ENCODE measurements at regions of chr6 and their contacts with region 1.

Region 1: GRCh38 chr6:145929037-145929633 is 35.0 kb downstream of the SHPRH start:
- DNase-seq: peak; percentile 53
- H3K4me3 ChIP-seq: no peak overlapping the region
- H3K27ac ChIP-seq: no peak overlapping the region
- H3K4me1 ChIP-seq: no peaks in the 10 kb centered on the region
- H3K27me3 ChIP-seq: no peaks in the 10 kb centered on the region
- CTCF ChIP-seq: peak; percentile 38 to 50
- POLR2A ChIP-seq: no peak

Region 2: GRCh38 chr6:145112711-145113151 is 816.4 kb before region 1 on chr6:
- CTCF ChIA-PET with region 1: no interaction called
- POLR2A ChIA-PET with region 1: no interaction called
- dilution Hi-C with region 1: no loop called
- intact Hi-C with region 1: no loop called
- DNase-seq: no peak
- H3K4me3 ChIP-seq: no peak overlapping the region
- H3K27ac ChIP-seq: no peak overlapping the region
- H3K4me1 ChIP-seq: no peaks in the 10 kb centered on the region
- H3K27me3 ChIP-seq: peaks cover 1 to 4% of the 10 kb centered on the region in 2 experiments
- CTCF ChIP-seq: no peak
- POLR2A ChIP-seq: no peak

Region 3: GRCh38 chr6:145904868-145905267 is 24.3 kb before region 1 on chr6:
- CTCF ChIA-PET with region 1: interaction called, 10 read pairs
- POLR2A ChIA-PET with region 1: no interaction called
- dilution Hi-C with region 1: no loop called
- intact Hi-C with region 1: no loop called
- DNase-seq: no peak
- H3K4me3 ChIP-seq: no peak overlapping the region
- H3K27ac ChIP-seq: no peak overlapping the region
- H3K4me1 ChIP-seq: no peaks in the 10 kb centered on the region
- H3K27me3 ChIP-seq: no peaks in the 10 kb centered on the region
- CTCF ChIP-seq: no peak
- POLR2A ChIP-seq: no peak

Region 4: GRCh38 chr6:145954985-145955384 is 25.9 kb after region 1 on chr6:
- CTCF ChIA-PET with region 1: interaction called, 13 read pairs
- POLR2A ChIA-PET with region 1: no interaction called
- dilution Hi-C with region 1: no loop called
- intact Hi-C with region 1: no loop called
- DNase-seq: no peak
- H3K4me3 ChIP-seq: no peak overlapping the region
- H3K27ac ChIP-seq: no peak overlapping the region
- H3K4me1 ChIP-seq: no peaks in the 10 kb centered on the region
- H3K27me3 ChIP-seq: no peaks in the 10 kb centered on the region
- CTCF ChIP-seq: no peak
- POLR2A ChIP-seq: no peak

Region 5: DNA sequence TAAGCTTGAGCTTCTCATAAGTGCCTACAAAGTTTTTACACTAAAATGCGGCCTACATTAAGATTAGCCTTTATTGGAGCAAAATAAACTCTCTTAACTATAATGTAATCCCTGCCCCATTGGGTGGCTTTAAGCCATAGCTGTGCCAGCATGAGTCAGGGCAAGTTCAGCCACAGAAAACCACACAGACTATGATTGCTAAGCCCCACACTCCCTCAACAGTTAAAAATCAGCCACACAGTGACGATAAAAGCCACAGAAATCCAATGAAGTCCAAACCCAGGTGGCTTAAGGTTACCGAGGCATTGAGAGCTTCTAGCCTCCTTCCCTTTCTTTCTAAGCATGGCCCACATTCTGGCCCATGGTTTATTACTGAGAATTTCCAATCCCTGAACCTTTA is 161.3 kb after region 1 on chr6:
- CTCF ChIA-PET with region 1: no interaction called
- POLR2A ChIA-PET with region 1: no interaction called
- dilution Hi-C with region 1: no loop called
- intact Hi-C with region 1: no loop called
- DNase-seq: no peak
- H3K4me3 ChIP-seq: no peak overlapping the region
- H3K27ac ChIP-seq: no peak overlapping the region
- H3K4me1 ChIP-seq: no peaks in the 10 kb centered on the region
- H3K27me3 ChIP-seq: no peaks in the 10 kb centered on the region
- CTCF ChIP-seq: no peak
- POLR2A ChIP-seq: no peak

Region 6: DNA sequence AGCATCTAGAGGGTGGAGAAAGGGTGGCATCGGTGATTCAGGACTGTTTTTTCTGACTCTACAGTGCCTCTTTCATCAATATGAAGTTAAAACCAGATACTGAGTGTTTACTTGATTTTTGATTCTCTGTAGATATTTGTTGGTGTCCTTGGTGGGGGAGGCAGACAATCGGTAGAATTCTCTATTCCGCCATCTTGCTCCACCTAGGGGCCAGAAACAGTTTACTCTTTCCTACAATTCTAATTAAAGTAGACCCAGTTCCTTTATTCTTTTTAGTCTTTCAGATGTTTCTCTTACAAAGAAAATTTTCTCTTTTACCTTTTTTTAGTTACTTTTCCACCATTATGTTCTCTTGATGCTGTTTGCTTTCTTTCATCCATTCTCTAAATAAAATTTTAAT is 452.4 kb after region 1 on chr6:
- CTCF ChIA-PET with region 1: no interaction called
- POLR2A ChIA-PET with region 1: no interaction called
- dilution Hi-C with region 1: no loop called
- intact Hi-C with region 1: loop called (anchors 2 kb)
- DNase-seq: no peak
- H3K4me3 ChIP-seq: no peak overlapping the region
- H3K27ac ChIP-seq: no peak overlapping the region
- H3K4me1 ChIP-seq: no peaks in the 10 kb centered on the region
- H3K27me3 ChIP-seq: no peaks in the 10 kb centered on the region
- CTCF ChIP-seq: peak; percentile 7 to 9
- POLR2A ChIP-seq: no peak

Region 7: GRCh38 chr6:146700078-146700686 is 771.0 kb after region 1 on chr6:
- CTCF ChIA-PET with region 1: interaction called, 87 read pairs
- POLR2A ChIA-PET with region 1: no interaction called
- dilution Hi-C with region 1: no loop called
- intact Hi-C with region 1: loop called (anchors 1 kb)
- DNase-seq: peak; percentile 78
- H3K4me3 ChIP-seq: no peak overlapping the region
- H3K27ac ChIP-seq: no peak overlapping the region
- H3K4me1 ChIP-seq: no peaks in the 10 kb centered on the region
- H3K27me3 ChIP-seq: peaks cover 0 to 3% of the 10 kb centered on the region in 2 experiments
- CTCF ChIP-seq: peak; percentile 44 to 52
- POLR2A ChIP-seq: no peak

Measured in endothelial cell of umbilical vein (primary cell).